ENCODE measurements at regions of chr6 and their contacts with region 1.

Region 1: GRCh38 chr6:117547688-117548621 is 54.4 kb downstream of the GOPC start:
- DNase-seq: peak; percentile 77 to 88
- ATAC-seq: peak; percentile 76 to 87
- H3K4me3 ChIP-seq: peak overlapping the region; percentile 54 to 71 (median 64)
- H3K27ac ChIP-seq: peak overlapping the region; percentile 78 to 88 (median 84)
- H3K4me1 ChIP-seq: peaks cover 20 to 23% of the 10 kb centered on the region in 2 donors
- H3K27me3 ChIP-seq: no peaks in the 10 kb centered on the region
- CTCF ChIP-seq: peak in 1 of 5 experiments; percentile 10
- POLR2A ChIP-seq: peak; percentile 43 to 63

Region 2: DNA sequence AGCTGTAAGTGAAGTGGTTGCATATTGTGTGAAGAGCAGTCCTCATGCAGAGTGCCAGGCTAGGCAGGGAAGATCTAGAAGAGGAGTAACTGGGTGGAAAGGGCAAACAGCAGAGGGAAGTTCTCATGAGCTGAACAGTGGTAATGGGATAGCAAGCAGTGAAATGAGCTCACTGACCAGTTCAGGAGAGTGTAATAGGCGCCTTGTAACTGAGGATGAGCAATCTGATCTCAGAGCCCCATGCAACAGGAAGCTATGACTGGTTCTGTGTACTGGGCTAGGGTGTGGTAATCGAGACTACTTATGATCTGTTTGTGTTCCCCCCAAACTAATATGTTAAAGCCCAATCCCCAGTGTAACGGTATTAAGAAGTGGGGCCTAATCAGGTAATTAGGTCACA is 572.4 kb before region 1 on chr6:
- in situ Hi-C with region 1: loop called in 1 of 4 experiments (anchors 25 kb)
- intact Hi-C with region 1: loop called (anchors 5 kb)
- DNase-seq: peak; percentile 65 to 68
- ATAC-seq: peak; percentile 86 to 94
- H3K4me3 ChIP-seq: no peak overlapping the region
- H3K27ac ChIP-seq: peak overlapping the region; percentile 78 to 91 (median 88)
- H3K4me1 ChIP-seq: peaks cover 27 to 30% of the 10 kb centered on the region in 2 donors
- H3K27me3 ChIP-seq: no peaks in the 10 kb centered on the region
- CTCF ChIP-seq: no peak
- POLR2A ChIP-seq: peak; percentile 39 to 66

Region 3: DNA sequence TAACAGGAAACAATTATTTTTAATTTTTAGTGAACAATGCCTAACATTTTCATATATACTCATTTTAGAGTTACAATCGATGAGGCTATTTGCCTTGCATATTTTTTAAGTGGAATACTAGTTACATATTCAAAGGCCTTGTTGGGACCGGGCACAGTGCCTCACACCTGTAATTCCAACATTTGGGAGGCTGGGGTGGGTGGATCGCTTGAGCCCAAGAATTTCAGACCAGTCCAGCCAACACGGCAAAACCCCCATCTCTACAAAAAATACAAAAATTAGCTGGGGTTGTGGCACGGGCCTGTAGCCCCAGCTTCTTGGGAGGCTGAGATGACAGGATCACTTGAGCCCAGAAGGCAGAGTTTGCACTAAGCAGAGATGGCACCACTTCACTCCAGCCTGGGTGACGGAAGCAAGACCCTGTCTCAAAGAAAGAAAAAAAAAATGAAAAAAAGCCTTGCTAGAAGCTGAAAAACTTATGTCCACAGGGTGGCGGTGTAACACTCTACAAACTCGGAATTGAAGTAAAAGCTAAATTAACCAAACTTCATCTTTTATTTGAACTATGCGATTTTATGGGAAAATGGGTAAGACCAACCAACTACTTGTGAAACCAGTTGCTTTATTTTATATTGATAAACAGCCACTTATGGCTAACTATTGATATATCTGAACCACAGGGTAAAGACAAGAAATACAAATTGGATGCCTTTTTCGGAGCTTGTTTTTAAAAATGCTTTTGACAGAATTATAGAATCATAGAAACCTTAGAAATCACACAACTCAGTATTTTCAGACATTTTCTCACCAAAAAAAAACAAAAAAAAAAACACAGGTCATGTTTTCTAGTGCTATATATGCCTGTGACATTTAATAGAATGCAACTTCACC is 98.2 kb before region 1 on chr6:
- in situ Hi-C with region 1: loop called (anchors 5 to 10 kb)
- intact Hi-C with region 1: loop called (anchors 2 kb)
- DNase-seq: peak; percentile 6 to 12
- ATAC-seq: no peak
- H3K4me3 ChIP-seq: no peak overlapping the region
- H3K27ac ChIP-seq: no peak overlapping the region
- H3K4me1 ChIP-seq: peaks cover 0 to 6% of the 10 kb centered on the region in 2 donors
- H3K27me3 ChIP-seq: no peaks in the 10 kb centered on the region
- CTCF ChIP-seq: peak; percentile 52 to 78 (median 66)
- POLR2A ChIP-seq: no peak

Region 4: GRCh38 chr6:117482240-117483003 is 65.5 kb before region 1 on chr6 and contains the start of gene DCBLD1:
- in situ Hi-C with region 1: no loop called
- intact Hi-C with region 1: loop called (anchors 2 kb)
- DNase-seq: peak; percentile 32 to 61
- ATAC-seq: peak; percentile 73 to 83
- H3K4me3 ChIP-seq: peak within 1 kb of the TSS; percentile 65 to 95 (median 82)
- H3K27ac ChIP-seq: peak within 1 kb of the TSS; percentile 89 to 92 (median 91)
- H3K4me1 ChIP-seq: peaks cover 13 to 19% of the 10 kb centered on the region in 2 donors
- H3K27me3 ChIP-seq: no peaks in the 10 kb centered on the region
- CTCF ChIP-seq: peak in 1 of 5 experiments; percentile 26
- POLR2A ChIP-seq: peak; percentile 52 to 75
- total RNA-seq, gene DCBLD1: 4.3 to 8.1 (median 5.2) TPM